B cell (primary cell): ENCODE measurements at regions of chr5 and their contacts with region 1.

Region 1: DNA sequence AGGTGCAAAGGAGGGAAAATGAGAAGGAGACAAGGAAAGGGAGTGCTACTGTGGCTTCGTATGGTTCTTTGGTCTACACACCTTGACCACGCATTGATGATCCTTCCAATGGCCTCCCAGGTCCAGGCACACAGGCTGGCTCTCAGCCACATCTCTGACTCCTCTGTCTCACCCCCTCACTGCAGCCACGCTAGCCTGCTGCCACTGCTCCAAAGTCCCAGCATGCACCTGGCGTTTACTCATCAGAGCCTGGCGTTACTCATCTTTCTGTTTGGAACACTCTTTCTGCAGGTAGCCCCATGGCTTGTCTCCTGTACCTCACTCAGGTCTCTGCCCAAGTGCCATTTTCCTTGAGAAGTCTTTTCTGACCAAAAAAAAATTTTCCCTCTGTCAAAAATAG is 195.5 kb downstream of the SNCAIP start:
- DNase-seq: no peak
- ATAC-seq: no peak
- H3K4me3 ChIP-seq: no peak overlapping the region
- H3K4me3 Mint-ChIP-seq: no peak overlapping the region
- H3K27ac ChIP-seq: no peak overlapping the region
- H3K27ac Mint-ChIP-seq: no peak overlapping the region
- H3K4me1 ChIP-seq: no peaks in the 10 kb centered on the region
- H3K4me1 Mint-ChIP-seq: no peaks in the 10 kb centered on the region
- H3K27me3 ChIP-seq: peaks cover 0 to 4% (median 1%) of the 10 kb centered on the region in 4 experiments
- H3K27me3 Mint-ChIP-seq: peaks cover 6% of the 10 kb centered on the region
- CTCF ChIP-seq: no peak

Region 2: DNA sequence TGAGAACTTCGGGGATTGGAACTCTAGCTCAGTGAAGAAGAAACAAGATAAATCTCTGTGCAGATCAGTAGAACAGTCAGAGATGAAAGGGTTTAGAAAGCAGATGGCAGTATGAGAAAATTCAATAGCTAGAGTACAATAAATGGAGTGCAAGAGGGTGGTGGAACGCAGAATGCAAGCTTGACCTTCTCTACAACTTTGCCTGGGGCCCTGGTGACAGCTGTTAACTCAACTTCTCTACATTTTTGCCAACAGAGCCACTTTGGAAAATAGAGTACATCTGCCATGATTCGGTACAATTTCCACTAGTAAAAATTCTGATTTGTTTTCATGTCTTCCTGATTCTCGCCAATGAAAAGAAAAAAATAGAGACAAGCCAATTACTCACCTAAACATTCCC is 19.9 kb before region 1 on chr5:
- CTCF ChIA-PET with region 1: no interaction called
- POLR2A ChIA-PET with region 1: interaction called, 11 read pairs
- intact Hi-C with region 1: no loop called
- DNase-seq: no peak
- ATAC-seq: no peak
- H3K4me3 ChIP-seq: no peak overlapping the region
- H3K4me3 Mint-ChIP-seq: no peak overlapping the region
- H3K27ac ChIP-seq: no peak overlapping the region
- H3K27ac Mint-ChIP-seq: no peak overlapping the region
- H3K4me1 ChIP-seq: no peaks in the 10 kb centered on the region
- H3K4me1 Mint-ChIP-seq: no peaks in the 10 kb centered on the region
- H3K27me3 ChIP-seq: no peaks in the 10 kb centered on the region
- H3K27me3 Mint-ChIP-seq: peaks cover 34% of the 10 kb centered on the region
- CTCF ChIP-seq: no peak